ENCODE measurements at regions of chr2 and their contacts with region 1.

Region 1: GRCh38 chr2:147910990-147911473 is 66.2 kb downstream of the ACVR2A start:
- DNase-seq: peak in 3 of 6 donors; percentile 8 to 22 (median 17)
- ATAC-seq: peak; percentile 55 to 85 (median 74)
- H3K4me3 ChIP-seq: no peak overlapping the region
- H3K27ac ChIP-seq: no peak overlapping the region
- H3K4me1 ChIP-seq: peaks cover 0 to 16% (median 10%) of the 10 kb centered on the region in 3 donors
- H3K27me3 ChIP-seq: no peaks in the 10 kb centered on the region
- CTCF ChIP-seq: peak; percentile 60 to 72 (median 70)

Region 2: GRCh38 chr2:147045113-147045512 is 865.9 kb before region 1 on chr2:
- intact Hi-C with region 1: loop called in 1 of 3 experiments (anchors 10 kb)
- DNase-seq: peak in 4 of 6 donors; percentile 13 to 61 (median 38)
- ATAC-seq: peak in 3 of 4 donors; percentile 61 to 66 (median 61)
- H3K4me3 ChIP-seq: no peak overlapping the region
- H3K27ac ChIP-seq: no peak overlapping the region
- H3K4me1 ChIP-seq: no peaks in the 10 kb centered on the region
- H3K27me3 ChIP-seq: no peaks in the 10 kb centered on the region
- CTCF ChIP-seq: peak; percentile 24 to 57 (median 52)

Region 3: DNA sequence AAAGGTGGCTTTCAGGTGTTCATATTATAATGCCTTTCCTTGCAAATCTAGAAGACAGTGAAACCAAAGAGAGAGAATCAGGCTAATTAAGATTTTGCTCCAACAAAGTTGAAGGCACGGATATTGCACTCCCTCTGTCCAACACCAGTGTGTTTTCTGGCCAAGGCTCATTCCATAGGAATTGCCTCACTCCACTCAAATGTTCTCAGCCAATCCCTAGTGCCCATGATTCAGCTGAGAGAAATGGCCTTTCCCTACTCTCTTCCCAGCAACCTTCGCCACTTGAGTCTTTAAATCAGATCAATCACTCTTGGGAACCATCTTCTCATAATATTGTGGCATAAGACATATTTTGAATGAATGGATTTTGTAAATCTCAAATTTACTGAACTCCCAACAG is 834.4 kb before region 1 on chr2:
- intact Hi-C with region 1: loop called in 1 of 3 experiments (anchors 10 kb)
- DNase-seq: no peak
- ATAC-seq: peak in 1 of 4 donors; percentile 43
- H3K4me3 ChIP-seq: no peak overlapping the region
- H3K27ac ChIP-seq: no peak overlapping the region
- H3K4me1 ChIP-seq: no peaks in the 10 kb centered on the region
- H3K27me3 ChIP-seq: peaks cover 0 to 4% (median 0%) of the 10 kb centered on the region in 4 donors
- CTCF ChIP-seq: no peak

Region 4: DNA sequence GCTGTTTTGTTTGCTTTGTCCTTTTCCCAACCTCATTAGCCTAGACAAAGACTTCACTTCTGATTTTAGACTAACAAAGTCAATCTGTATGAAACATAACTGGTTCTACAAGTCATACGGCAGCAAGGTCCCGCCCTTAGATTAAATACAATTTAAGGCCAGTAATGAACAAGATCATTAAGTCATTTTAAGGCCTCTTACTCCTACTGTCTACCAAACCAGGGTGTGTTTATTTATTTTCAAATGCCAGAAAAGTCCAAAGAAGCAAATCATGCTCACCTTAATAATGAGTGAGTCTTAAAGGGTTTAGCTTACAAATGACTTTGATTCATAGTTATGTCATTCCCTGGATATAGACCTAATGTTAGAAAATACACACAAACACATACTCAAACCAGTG is 214.6 kb before region 1 on chr2:
- intact Hi-C with region 1: no loop called
- DNase-seq: no peak
- ATAC-seq: peak in 2 of 4 donors; percentile 23 to 35
- H3K4me3 ChIP-seq: no peak overlapping the region
- H3K27ac ChIP-seq: no peak overlapping the region
- H3K4me1 ChIP-seq: no peaks in the 10 kb centered on the region
- H3K27me3 ChIP-seq: no peaks in the 10 kb centered on the region
- CTCF ChIP-seq: no peak

Region 5: DNA sequence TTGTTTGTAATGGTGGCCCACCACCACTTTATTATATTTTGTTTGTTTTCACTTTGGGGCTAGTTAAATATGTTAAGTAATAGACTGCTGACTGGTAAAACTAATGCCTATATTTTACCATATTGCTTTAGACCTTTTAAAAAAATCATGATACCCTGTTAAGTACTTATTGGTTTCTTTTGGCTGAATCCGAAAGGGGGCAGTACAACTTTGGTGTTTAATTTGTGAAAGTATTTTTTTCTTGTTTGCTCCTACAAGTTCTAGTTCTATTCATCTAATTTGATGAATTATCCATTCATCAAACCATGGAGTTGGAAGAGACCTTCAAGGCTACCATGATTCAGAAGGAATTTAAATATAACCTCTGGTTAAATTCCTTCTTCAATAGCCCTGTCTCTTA is 256.8 kb after region 1 on chr2:
- intact Hi-C with region 1: no loop called
- DNase-seq: no peak
- ATAC-seq: no peak
- H3K4me3 ChIP-seq: no peak overlapping the region
- H3K27ac ChIP-seq: no peak overlapping the region
- H3K4me1 ChIP-seq: peaks cover 0 to 14% (median 0%) of the 10 kb centered on the region in 3 donors
- H3K27me3 ChIP-seq: no peaks in the 10 kb centered on the region
- CTCF ChIP-seq: no peak